ENCODE measurements at regions of chr1 and their contacts with region 1.

Region 1: DNA sequence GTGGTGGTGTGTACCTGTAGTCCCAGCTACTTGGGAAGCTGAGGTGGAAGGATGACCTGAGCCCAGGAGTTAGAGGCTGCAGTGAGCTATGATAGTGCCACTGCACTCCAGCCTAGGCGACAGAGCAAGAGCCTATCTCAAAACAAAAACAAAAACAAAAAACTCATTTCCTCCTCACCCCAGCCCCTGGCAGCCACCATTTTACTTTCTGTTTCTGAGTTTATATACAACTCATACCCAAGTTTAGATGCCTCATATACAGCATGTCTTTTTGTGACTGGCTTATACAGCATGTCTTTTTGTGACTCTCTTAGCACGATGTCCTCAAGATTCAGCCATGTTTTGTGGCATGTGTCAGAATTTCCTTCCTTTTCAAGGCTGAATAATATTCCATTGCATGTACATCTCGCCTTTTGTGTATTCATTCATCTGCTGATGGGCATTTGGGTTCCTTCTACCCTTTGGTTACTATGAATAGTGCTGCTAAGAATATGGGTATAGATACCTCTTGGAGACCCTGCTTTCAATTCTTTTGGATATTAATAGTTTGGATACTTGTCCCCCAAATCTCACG is 14.7 kb downstream of the COA7 start:
- DNase-seq: no peak
- H3K4me3 ChIP-seq: no peak overlapping the region
- H3K27ac ChIP-seq: no peak overlapping the region
- H3K4me1 ChIP-seq: peaks cover 3 to 15% (median 9%) of the 10 kb centered on the region in 6 donors
- H3K27me3 ChIP-seq: no peaks in the 10 kb centered on the region
- CTCF ChIP-seq: no peak
- POLR2A ChIP-seq: no peak

Region 2: DNA sequence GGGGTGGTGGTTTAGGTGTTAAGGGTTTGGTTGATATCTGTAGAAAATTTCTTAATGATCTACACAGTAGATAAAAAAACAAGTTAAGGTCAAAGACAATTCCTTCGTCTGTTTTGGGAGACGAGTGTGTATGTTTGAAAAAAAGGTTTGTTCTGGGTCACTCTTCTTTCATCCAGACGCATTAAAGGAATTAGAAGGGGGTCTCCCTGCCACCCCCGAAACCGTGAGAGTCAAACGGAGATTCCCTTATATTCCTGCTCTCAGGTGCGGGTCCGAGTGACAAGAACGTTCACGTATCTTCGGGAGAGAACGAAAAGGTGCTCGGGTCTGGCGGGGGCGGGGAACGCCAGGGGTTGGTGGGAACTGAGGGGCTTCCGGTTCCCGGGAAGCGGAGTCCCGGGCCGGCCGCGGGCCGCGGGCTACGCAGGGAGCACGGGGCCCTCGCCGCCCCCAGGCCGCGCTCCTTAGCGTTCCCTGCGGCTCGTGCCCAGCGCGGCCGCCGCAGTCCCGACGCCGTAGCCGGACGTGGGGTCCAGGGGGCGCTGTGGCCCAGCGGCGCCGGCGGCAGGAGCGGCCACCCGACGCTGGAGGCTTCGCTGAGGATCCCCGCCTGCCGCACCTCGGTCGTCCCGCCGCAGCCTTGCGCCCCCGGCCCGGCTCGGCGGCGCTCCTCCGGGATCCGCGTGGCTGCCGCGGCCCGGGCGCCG is 541.8 kb before region 1 on chr1 and contains the start of gene ZFYVE9:
- intact Hi-C with region 1: loop called (anchors 10 kb)
- DNase-seq: peak; percentile 94
- H3K4me3 ChIP-seq: peak within 1 kb of the TSS; percentile 63 to 86 (median 70)
- H3K27ac ChIP-seq: peak within 1 kb of the TSS; percentile 76 to 95 (median 88)
- H3K4me1 ChIP-seq: peaks cover 10 to 44% (median 33%) of the 10 kb centered on the region in 6 donors
- H3K27me3 ChIP-seq: peaks cover 0 to 47% (median 0%) of the 10 kb centered on the region in 7 donors
- CTCF ChIP-seq: peak in 9 of 11 experiments; percentile 14 to 90 (median 82)
- POLR2A ChIP-seq: no peak
- total RNA-seq, gene ZFYVE9: 7.2 to 16.7 (median 10.6) TPM

Region 3: DNA sequence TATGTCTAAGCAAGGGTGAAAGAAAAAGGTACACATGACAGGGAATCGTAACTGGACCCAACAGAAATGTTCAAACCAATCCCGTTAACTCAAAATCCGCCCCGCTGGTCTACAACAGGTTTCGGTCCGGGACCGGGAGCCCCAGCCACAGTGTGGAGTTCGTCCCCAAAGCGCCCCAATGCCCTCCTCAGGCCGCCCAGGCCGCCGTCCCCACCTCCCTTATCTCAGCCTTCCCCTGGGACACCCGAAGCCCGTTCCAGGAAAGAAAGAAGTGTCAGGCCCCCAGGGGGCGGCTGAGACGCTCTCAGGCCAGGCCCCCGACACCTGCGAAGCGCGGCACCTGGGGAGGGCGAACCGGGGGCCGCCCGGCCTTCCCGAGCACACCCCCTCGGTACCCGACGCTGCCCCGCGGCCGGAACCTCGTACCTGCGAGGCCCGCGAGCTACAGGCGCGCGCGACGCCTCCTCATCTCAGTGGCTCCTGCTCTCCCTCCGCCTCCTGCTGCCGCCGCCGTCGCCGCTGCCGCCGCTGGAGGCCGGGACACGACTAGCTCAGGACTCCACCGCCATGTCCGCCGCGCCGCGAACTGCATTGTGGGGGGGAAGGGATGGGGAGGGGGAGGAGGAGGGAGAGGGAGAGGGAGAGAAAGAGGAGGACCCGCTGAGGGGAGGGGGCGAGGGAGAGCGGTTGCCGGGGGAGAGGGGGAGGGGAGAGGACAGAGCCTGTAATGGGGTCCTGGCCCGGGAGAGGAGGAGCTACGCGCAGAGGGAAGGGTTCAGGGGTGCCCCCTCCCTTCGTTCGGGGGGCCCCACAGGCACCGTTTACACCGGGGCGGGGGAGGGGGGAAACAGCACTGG is 130.7 kb before region 1 on chr1 and contains the start of gene TUT4:
- intact Hi-C with region 1: loop called (anchors 10 kb)
- DNase-seq: peak; percentile 95
- H3K4me3 ChIP-seq: peak within 1 kb of the TSS; percentile 71 to 90 (median 88)
- H3K27ac ChIP-seq: peak within 1 kb of the TSS; percentile 76 to 96 (median 95)
- H3K4me1 ChIP-seq: peaks cover 18 to 63% (median 39%) of the 10 kb centered on the region in 6 donors
- H3K27me3 ChIP-seq: no peaks in the 10 kb centered on the region
- CTCF ChIP-seq: peak in 1 of 11 experiments; percentile 29
- POLR2A ChIP-seq: peak in 1 of 3 donors; percentile 15
- total RNA-seq, gene TUT4: 74.1 to 120 (median 84.6) TPM

Measured in spleen (tissue), 13 donors.